MCF 10A (cell line): ENCODE measurements at regions of chr17 and their contacts with region 1.

Region 1: GRCh38 chr17:29219378-29220047 is 27.1 kb upstream of the CRYBA1 start:
- DNase-seq: peak; percentile 83
- H3K4me3 Mint-ChIP-seq: no peak overlapping the region
- H3K27ac Mint-ChIP-seq: no peak overlapping the region
- H3K4me1 Mint-ChIP-seq: peaks cover 23% of the 10 kb centered on the region
- H3K27me3 Mint-ChIP-seq: no peaks in the 10 kb centered on the region
- CTCF ChIP-seq: peak; percentile 87

Region 2: DNA sequence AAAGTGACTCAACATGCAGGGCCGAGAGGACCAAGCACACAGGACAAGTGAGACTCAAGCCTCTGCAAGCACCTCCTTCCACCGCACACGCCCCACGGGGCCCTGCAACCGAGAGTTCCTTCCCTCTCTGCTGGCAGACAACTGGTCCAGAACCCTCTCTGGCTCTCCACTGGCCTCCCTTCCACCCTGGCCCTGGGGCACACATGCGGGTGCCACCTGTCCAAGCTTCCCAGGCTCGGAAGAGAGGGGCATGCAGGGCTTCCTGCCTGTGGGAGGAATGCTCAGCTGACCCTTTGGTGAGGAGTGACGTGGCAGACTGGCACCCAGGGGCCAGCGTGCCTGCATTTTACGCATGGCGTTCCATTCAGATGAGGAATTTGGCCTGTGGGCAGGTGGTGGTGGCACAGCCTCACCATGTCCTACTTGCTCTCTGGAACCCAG is 116.8 kb before region 1 on chr17:
- CTCF ChIA-PET with region 1: no interaction called
- POLR2A ChIA-PET with region 1: no interaction called
- intact Hi-C with region 1: no loop called
- DNase-seq: peak; percentile 79
- H3K4me3 Mint-ChIP-seq: peak overlapping the region; percentile 54
- H3K27ac Mint-ChIP-seq: peak overlapping the region; percentile 77
- H3K4me1 Mint-ChIP-seq: peaks cover 15% of the 10 kb centered on the region
- H3K27me3 Mint-ChIP-seq: no peaks in the 10 kb centered on the region
- CTCF ChIP-seq: no peak

Region 3: GRCh38 chr17:29148790-29149430 is 70.6 kb before region 1 on chr17:
- CTCF ChIA-PET with region 1: interaction called, 287 read pairs
- POLR2A ChIA-PET with region 1: interaction called, 12 read pairs
- intact Hi-C with region 1: loop called (anchors 1 kb)
- DNase-seq: peak; percentile 92
- H3K4me3 Mint-ChIP-seq: peak overlapping the region; percentile 61
- H3K27ac Mint-ChIP-seq: peak overlapping the region; percentile 85
- H3K4me1 Mint-ChIP-seq: peaks cover 60% of the 10 kb centered on the region
- H3K27me3 Mint-ChIP-seq: no peaks in the 10 kb centered on the region
- CTCF ChIP-seq: peak; percentile 98

Region 4: DNA sequence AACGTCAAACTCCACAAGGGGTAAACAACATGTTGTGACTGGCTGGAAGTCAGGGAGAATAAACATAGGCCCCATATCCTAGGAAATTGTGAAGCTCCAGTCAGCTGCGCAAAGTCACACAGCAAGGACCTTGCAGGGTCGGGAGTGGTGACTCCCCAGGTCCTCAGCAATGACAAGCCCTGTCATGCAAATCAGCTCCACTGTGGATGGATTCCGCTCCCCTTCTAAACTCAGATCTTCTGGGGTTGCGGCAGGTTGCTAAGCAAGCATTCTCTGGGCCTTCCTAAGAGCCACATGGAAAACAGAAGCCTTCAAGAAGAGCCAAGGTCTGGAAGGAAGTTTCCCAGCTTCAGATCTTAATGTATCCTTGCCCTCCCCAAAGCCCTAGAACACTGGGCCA is 10.4 kb before region 1 on chr17:
- CTCF ChIA-PET with region 1: interaction called, 19 read pairs
- POLR2A ChIA-PET with region 1: interaction called, 3 read pairs
- intact Hi-C with region 1: no loop called
- DNase-seq: no peak
- H3K4me3 Mint-ChIP-seq: no peak overlapping the region
- H3K27ac Mint-ChIP-seq: no peak overlapping the region
- H3K4me1 Mint-ChIP-seq: no peaks in the 10 kb centered on the region
- H3K27me3 Mint-ChIP-seq: no peaks in the 10 kb centered on the region
- CTCF ChIP-seq: no peak

Region 5: GRCh38 chr17:29241015-29241963 is 21.8 kb after region 1 on chr17:
- CTCF ChIA-PET with region 1: interaction called, 55 read pairs
- POLR2A ChIA-PET with region 1: interaction called, 4 read pairs
- intact Hi-C with region 1: no loop called
- DNase-seq: peak; percentile 97
- H3K4me3 Mint-ChIP-seq: no peak overlapping the region
- H3K27ac Mint-ChIP-seq: peak overlapping the region; percentile 75
- H3K4me1 Mint-ChIP-seq: peaks cover 32% of the 10 kb centered on the region
- H3K27me3 Mint-ChIP-seq: no peaks in the 10 kb centered on the region
- CTCF ChIP-seq: no peak

Region 6: DNA sequence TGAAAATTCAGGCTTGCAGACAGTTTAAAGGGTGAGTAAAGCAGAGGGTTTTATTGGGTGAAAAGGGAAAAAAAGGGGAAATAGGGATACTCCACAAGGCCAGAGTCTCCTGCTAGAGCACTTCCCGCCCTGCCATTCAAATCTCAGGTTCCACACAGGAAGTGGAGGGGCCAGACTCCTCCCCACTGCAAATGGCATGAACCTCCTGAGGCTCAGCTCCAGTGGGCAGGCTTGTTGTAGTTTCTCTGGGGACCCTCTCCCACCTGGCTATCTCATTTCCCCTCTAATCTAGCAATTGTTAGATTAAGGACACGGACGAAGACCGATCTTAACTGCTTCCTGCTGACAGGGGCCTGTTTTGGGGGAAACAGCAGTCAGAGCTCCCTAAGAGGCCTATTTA is 214.0 kb after region 1 on chr17:
- CTCF ChIA-PET with region 1: no interaction called
- POLR2A ChIA-PET with region 1: no interaction called
- intact Hi-C with region 1: no loop called
- DNase-seq: no peak
- H3K4me3 Mint-ChIP-seq: no peak overlapping the region
- H3K27ac Mint-ChIP-seq: no peak overlapping the region
- H3K4me1 Mint-ChIP-seq: peaks cover 7% of the 10 kb centered on the region
- H3K27me3 Mint-ChIP-seq: no peaks in the 10 kb centered on the region
- CTCF ChIP-seq: no peak

Region 7: GRCh38 chr17:29954405-29954804 is 734.9 kb after region 1 on chr17:
- CTCF ChIA-PET with region 1: no interaction called
- POLR2A ChIA-PET with region 1: no interaction called
- intact Hi-C with region 1: no loop called
- DNase-seq: no peak
- H3K4me3 Mint-ChIP-seq: no peak overlapping the region
- H3K27ac Mint-ChIP-seq: no peak overlapping the region
- H3K4me1 Mint-ChIP-seq: peaks cover 11% of the 10 kb centered on the region
- H3K27me3 Mint-ChIP-seq: no peaks in the 10 kb centered on the region
- CTCF ChIP-seq: peak; percentile 9